Activated B cell treated with CpG ODN at 0.5 μM for 24 hours (primary cell): ENCODE measurements at regions of chr14 and their contacts with region 1.

Region 1: DNA sequence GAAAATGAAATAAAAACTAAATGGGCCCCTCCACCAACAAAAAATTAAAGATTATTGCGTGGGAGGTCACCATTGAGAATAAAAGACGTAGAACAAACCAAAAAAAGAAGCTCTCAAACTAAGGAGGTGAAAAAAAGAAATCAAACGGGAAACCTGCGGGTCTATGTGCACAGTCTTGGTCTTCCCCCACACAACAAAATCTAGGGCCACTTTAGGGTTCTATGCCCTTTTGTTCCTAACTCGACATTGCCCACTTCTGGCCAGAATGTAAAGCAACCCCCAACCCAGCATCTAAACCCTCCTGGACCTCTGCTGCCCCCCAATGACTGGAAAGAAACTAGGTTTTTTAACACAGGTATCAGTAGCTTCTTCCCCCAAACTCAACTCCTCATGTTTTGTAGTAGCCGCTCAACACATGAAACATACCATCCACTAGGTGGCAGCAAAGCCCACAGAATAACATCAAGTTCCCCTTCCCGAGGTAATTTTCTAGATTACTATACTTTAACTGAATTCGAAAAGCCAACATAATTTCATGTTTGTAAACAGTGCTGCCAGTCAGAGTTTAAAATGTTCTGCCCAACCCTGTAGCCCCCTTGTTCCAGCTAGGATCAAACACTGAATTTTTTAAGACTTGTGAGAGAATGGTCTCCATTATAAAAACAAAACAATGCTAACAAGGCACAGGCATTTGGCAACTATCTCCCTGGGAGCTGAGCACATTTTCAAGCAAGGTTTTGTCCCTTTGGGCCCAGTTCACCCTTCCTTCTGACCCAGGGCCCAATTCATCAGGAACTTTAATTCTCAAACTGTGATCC is 18.7 kb downstream of the DAD1 start:
- DNase-seq: peak; percentile 53
- ATAC-seq: peak; percentile 88
- H3K4me3 Mint-ChIP-seq: peak overlapping the region; percentile 74
- H3K27ac Mint-ChIP-seq: peak overlapping the region; percentile 94
- H3K4me1 Mint-ChIP-seq: peaks cover 53% of the 10 kb centered on the region
- H3K27me3 Mint-ChIP-seq: no peaks in the 10 kb centered on the region
- CTCF ChIP-seq: peak; percentile 76

Region 2: GRCh38 chr14:22314181-22314820 is 256.0 kb before region 1 on chr14:
- CTCF ChIA-PET with region 1: interaction called, 47 read pairs
- POLR2A ChIA-PET with region 1: no interaction called
- intact Hi-C with region 1: loop called (anchors 1 kb)
- DNase-seq: no peak
- ATAC-seq: peak; percentile 95
- H3K4me3 Mint-ChIP-seq: no peak overlapping the region
- H3K27ac Mint-ChIP-seq: no peak overlapping the region
- H3K4me1 Mint-ChIP-seq: no peaks in the 10 kb centered on the region
- H3K27me3 Mint-ChIP-seq: no peaks in the 10 kb centered on the region
- CTCF ChIP-seq: no peak

Region 3: DNA sequence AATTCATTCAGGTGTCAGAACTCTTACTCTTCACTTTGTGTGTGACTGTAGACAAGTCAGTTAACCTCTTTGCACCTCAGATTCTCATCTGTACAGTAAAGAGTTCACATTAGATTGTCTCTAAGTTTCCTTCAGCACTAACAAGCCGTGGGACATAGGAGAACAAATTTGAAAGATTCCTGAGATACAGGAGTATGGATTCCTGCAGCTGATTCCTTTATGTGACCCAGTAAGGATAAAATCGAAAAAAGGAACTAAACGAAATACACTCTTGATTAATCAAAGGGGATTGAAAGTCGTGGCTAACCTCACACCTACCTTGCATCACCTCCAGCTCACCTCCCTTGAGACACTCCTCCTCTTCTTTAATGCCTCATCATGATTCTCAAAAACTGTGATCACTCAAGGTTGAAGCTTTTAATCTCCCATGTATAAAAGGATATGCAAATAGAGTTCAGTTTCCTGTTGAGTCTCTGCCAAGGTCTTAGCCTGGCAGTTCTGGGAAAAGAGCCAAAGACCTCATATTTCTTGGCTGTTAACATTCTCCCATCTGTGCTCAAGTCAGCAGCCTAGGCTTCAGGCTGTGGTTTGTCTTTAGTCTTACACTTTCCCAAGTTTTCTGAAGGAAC is 137.9 kb before region 1 on chr14:
- CTCF ChIA-PET with region 1: interaction called, 10 read pairs
- POLR2A ChIA-PET with region 1: no interaction called
- intact Hi-C with region 1: no loop called
- DNase-seq: no peak
- ATAC-seq: peak; percentile 89
- H3K4me3 Mint-ChIP-seq: peak overlapping the region; percentile 17
- H3K27ac Mint-ChIP-seq: peak overlapping the region; percentile 32
- H3K4me1 Mint-ChIP-seq: peaks cover 43% of the 10 kb centered on the region
- H3K27me3 Mint-ChIP-seq: peaks cover 14% of the 10 kb centered on the region
- CTCF ChIP-seq: no peak

Region 4: GRCh38 chr14:22549981-22550673 is 20.2 kb before region 1 on chr14:
- CTCF ChIA-PET with region 1: interaction called, 324 read pairs
- POLR2A ChIA-PET with region 1: interaction called, 163 read pairs
- intact Hi-C with region 1: no loop called
- DNase-seq: no peak
- ATAC-seq: peak; percentile 85
- H3K4me3 Mint-ChIP-seq: peak overlapping the region; percentile 72
- H3K27ac Mint-ChIP-seq: peak overlapping the region; percentile 90
- H3K4me1 Mint-ChIP-seq: peaks cover 80% of the 10 kb centered on the region
- H3K27me3 Mint-ChIP-seq: no peaks in the 10 kb centered on the region
- CTCF ChIP-seq: no peak

Region 5: GRCh38 chr14:22713631-22713950 is 143.2 kb after region 1 on chr14:
- CTCF ChIA-PET with region 1: no interaction called
- POLR2A ChIA-PET with region 1: interaction called, 3 read pairs
- intact Hi-C with region 1: loop called (anchors 2 kb)
- DNase-seq: no peak
- ATAC-seq: no peak
- H3K4me3 Mint-ChIP-seq: peak overlapping the region; percentile 88
- H3K27ac Mint-ChIP-seq: peak overlapping the region; percentile 78
- H3K4me1 Mint-ChIP-seq: peaks cover 13% of the 10 kb centered on the region
- H3K27me3 Mint-ChIP-seq: peaks cover 29% of the 10 kb centered on the region
- CTCF ChIP-seq: no peak

Region 6: DNA sequence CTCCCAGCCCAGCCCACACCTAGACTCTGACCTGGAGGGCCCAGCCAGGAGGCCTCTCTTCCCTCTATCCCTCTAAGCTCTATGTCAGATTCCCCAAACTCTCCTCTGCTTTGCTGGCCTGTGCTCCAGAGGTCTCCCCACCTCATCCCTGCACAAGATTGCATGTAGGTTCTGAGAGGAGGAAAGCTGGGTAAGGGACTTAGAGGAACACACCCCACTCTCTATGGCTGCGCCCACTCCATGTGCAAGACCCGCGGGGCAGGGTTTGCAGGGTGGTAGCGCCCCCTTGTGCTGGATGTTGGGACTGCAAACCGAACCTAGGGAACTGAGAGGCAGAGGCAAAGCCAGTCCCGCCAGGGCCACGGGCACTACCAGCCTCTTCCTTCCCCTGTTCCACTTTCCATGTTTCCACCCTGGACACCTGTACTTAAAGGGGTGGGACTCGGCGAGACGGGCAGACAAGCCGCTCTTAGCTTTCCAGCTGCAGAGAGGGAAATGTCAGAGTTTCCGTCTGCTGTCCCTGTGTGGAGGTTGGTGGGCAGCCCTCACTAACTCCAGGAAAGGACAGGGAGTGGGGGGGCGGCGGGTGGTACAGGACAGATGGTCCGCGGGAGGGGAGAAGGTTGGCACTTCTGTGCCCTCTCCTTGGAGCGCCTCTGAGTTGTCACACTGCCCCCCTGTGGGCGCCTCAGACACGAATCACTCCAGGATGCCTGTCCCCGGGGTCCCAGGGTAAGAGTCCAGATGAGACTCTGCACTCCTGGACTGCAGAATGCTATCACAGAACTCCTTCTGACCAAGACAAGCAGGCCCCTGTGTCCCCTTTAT is 282.8 kb after region 1 on chr14:
- CTCF ChIA-PET with region 1: interaction called, 125 read pairs
- POLR2A ChIA-PET with region 1: interaction called, 5 read pairs
- intact Hi-C with region 1: loop called (anchors 1 kb)
- DNase-seq: peak; percentile 97
- ATAC-seq: peak; percentile 94
- H3K4me3 Mint-ChIP-seq: peak overlapping the region; percentile 79
- H3K27ac Mint-ChIP-seq: peak overlapping the region; percentile 78
- H3K4me1 Mint-ChIP-seq: peaks cover 6% of the 10 kb centered on the region
- H3K27me3 Mint-ChIP-seq: peaks cover 6% of the 10 kb centered on the region
- CTCF ChIP-seq: peak; percentile 81